ENCODE measurements at regions of chr14 and their contacts with region 1.

Region 1: GRCh38 chr14:76710056-76711010 is 50.9 kb upstream of the VASH1 start:
- DNase-seq: peak; percentile 37
- ATAC-seq: no peak
- H3K4me3 Mint-ChIP-seq: no peak overlapping the region
- H3K27ac Mint-ChIP-seq: no peak overlapping the region
- H3K4me1 Mint-ChIP-seq: no peaks in the 10 kb centered on the region
- H3K27me3 Mint-ChIP-seq: peaks cover 7% of the 10 kb centered on the region
- CTCF ChIP-seq: peak; percentile 83

Region 2: GRCh38 chr14:76022991-76023390 is 687.3 kb before region 1 on chr14:
- CTCF ChIA-PET with region 1: no interaction called
- POLR2A ChIA-PET with region 1: no interaction called
- intact Hi-C with region 1: no loop called
- DNase-seq: no peak
- ATAC-seq: no peak
- H3K4me3 Mint-ChIP-seq: no peak overlapping the region
- H3K27ac Mint-ChIP-seq: no peak overlapping the region
- H3K4me1 Mint-ChIP-seq: no peaks in the 10 kb centered on the region
- H3K27me3 Mint-ChIP-seq: no peaks in the 10 kb centered on the region
- CTCF ChIP-seq: no peak

Region 3: DNA sequence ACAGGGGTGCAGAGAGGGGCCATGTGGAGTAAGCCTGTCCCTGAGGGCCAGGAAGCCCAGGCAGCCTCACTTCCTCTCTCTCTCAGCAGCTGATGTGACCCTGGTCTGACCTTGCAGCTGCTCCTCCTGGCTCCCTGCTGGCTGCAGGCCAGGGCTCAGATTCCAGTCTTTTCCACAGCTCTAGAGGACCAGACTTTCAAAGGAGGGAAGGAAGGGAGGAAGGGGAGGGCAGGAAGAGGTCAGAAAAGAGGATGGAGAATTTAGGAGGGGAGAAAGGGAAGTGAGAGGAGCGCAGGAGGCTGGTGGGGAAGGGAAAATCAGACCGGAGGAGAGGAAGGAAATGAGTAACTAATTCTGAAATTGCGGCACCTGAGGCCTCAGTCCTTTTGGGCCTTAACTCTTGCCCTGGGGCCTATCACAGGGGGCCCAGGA is 10.1 kb after region 1 on chr14:
- CTCF ChIA-PET with region 1: interaction called, 29 read pairs
- POLR2A ChIA-PET with region 1: interaction called, 4 read pairs
- intact Hi-C with region 1: no loop called
- DNase-seq: no peak
- ATAC-seq: no peak
- H3K4me3 Mint-ChIP-seq: no peak overlapping the region
- H3K27ac Mint-ChIP-seq: no peak overlapping the region
- H3K4me1 Mint-ChIP-seq: no peaks in the 10 kb centered on the region
- H3K27me3 Mint-ChIP-seq: peaks cover 3% of the 10 kb centered on the region
- CTCF ChIP-seq: no peak

Region 4: GRCh38 chr14:76776666-76777251 is 66.4 kb after region 1 on chr14:
- CTCF ChIA-PET with region 1: interaction called, 116 read pairs
- POLR2A ChIA-PET with region 1: no interaction called
- intact Hi-C with region 1: loop called (anchors 10 kb)
- DNase-seq: no peak
- ATAC-seq: peak; percentile 25
- H3K4me3 Mint-ChIP-seq: no peak overlapping the region
- H3K27ac Mint-ChIP-seq: no peak overlapping the region
- H3K4me1 Mint-ChIP-seq: peaks cover 11% of the 10 kb centered on the region
- H3K27me3 Mint-ChIP-seq: peaks cover 5% of the 10 kb centered on the region
- CTCF ChIP-seq: peak; percentile 13

Region 5: DNA sequence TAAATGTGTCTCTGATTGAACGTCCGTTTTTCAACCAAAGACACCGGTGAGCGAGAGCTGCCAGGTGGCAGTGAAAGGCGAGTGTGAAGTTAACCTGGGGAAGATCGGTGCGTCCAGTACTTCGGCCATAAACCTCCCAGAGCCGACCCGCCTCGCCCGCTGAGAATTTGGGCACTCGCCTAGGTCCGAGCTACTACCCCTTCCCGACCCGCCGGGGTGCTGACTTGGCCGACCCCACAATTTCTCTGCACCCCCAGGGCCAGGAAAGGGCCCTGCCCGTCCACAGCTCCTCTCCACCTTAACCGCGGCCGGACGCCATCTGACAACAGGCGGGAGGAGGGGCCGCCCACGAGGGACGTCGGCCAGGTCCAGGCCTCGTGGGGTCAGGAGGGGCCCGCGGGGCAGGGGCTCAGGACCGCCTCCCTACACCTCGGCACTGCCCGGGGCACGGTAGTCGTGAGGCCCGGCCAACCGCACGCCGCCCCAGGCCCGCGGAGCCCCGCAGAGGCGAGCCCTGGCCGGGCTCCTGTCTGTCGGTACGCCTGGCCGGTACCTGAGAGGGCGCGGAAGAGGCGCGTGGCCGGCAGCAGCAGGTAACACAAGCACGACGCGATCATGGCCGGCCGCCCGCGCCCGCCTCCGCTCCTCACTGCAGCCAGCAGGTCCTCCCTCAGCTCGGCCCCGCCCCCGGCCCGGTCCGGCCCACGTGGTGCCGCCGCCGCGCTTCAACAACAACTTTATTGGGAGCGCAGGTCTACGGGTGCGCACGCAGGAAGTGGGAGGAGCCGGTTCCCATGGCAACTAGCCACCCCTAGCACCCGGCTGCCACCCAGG is 102.1 kb after region 1 on chr14 and contains the start of gene ANGEL1:
- CTCF ChIA-PET with region 1: interaction called, 36 read pairs
- POLR2A ChIA-PET with region 1: interaction called, 3 read pairs
- intact Hi-C with region 1: no loop called
- DNase-seq: peak; percentile 97
- ATAC-seq: peak; percentile 91
- H3K4me3 Mint-ChIP-seq: peak within 1 kb of the TSS; percentile 86
- H3K27ac Mint-ChIP-seq: peak within 1 kb of the TSS; percentile 84
- H3K4me1 Mint-ChIP-seq: peaks cover 23% of the 10 kb centered on the region
- H3K27me3 Mint-ChIP-seq: no peaks in the 10 kb centered on the region
- CTCF ChIP-seq: no peak
- total RNA-seq, gene ANGEL1: 16.5 to 21.5 TPM

Measured in activated CD8-positive, alpha-beta T cell treated with anti-CD3 and anti-CD28 coated beads for 36 hours (primary cell).